Cardiac septum (tissue), 1 donor: ENCODE measurements at regions of chr2 and their contacts with region 1.

Region 1: GRCh38 chr2:224585205-224586088 is at the start of gene CUL3:
- DNase-seq: peak; percentile 100
- total RNA-seq, gene CUL3: 66.0 TPM

Region 2: GRCh38 chr2:223957092-223957851 is 628.2 kb before region 1 on chr2 and contains the start of gene MRPL44:
- intact Hi-C with region 1: loop called (anchors 10 kb)
- DNase-seq: peak; percentile 99
- total RNA-seq, gene MRPL44: 34.2 TPM

Region 3: DNA sequence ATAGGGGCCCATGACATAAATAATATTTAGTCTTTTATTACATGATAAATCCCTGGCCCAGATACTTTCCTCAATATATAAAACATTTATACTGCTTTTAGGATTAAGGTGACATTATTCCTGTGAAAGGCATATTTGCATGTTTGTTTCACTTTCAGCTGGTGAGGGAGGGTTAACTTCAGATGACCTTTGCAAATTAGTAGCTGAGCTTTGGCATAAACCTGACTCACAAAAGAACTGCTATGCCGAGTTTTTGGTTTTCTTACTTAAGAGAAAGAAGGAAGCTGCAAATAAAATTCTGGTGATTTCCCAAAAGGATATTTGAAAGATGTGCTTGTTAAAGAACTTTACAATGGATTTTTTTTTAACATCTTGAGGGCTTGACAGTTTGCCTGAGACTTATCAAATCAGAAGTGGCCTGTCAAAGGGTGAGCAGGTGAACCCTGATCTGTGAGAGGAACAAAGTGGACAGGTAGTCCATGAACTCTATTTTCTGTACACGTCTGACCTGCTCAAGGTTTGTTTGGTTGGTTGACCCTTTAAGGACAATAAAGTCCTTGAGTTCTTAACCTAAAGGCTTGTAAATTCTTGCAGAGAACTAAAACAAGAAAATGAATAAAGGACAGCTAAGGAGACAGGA is 277.1 kb before region 1 on chr2:
- intact Hi-C with region 1: no loop called
- DNase-seq: no peak

Region 4: DNA sequence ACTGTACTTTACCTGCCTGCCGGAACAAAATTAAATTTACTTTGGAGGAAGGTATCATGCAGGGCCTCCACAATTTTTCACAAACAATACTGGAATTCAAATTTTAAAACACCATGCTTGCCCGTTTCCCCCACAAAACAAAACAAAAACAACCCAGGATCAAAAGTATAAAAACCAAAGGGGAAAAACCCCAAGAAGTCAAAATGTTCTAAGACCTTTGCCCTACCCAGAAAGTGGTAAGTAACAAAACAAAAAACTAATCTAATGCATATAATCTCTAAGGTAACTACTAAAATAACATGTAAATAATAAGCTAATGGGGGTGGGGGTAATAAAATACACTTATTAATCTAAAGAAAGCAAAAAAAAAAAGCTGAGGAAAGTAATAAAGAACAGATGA is 60.8 kb before region 1 on chr2:
- intact Hi-C with region 1: loop called (anchors 5 kb)
- DNase-seq: no peak

Region 5: GRCh38 chr2:224691563-224691962 is 106.1 kb after region 1 on chr2:
- intact Hi-C with region 1: no loop called
- DNase-seq: no peak